Activated CD4-positive, alpha-beta memory T cell treated with anti-CD3 and anti-CD28 coated beads, Interleukin-2, amount 10 ng/mL, durations not matched to agents 7 days and 5 days (primary cell): ENCODE measurements at regions of chr10 and their contacts with region 1.

Region 1: DNA sequence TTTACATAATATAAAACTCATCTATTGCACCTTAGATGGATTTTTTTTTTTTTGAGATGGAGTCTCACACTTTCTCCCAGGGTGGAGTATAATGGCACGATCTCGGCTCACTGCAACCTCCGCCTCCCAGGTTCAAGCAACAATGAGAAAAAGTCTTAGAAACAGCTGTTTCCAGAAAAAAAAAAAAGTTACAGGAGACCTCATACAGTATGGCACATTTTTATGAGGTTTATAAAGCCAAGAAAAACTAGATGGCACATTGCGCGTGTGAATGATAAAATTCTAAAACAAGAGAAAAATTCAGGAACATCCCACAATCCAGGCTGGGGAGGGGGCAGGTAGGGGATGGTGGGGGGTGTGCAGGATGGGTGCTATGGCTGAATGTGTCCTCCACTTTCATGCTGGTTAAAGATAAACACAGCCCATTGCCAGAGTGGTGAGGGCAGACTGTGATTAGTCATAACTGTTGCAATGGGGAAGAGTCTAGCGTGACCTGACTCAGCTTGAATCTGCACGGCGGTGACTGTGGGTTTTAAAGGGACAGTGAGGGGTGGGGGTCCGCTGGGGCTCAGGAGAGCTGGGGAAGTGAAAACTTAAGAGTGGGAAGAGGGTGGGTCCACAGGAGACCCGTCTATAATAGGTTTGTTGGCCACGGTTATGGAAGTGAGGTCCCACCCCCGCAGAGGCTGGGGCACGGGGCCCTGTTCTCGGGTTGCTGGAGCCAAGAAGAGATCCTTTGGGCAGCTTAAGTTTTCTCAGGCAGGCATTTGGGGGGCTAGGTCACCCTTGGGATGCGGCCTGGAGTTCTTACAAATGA is 11.9 kb upstream of the LRRC27 start:
- DNase-seq: peak; percentile 70
- H3K4me3 Mint-ChIP-seq: no peak overlapping the region
- H3K27ac Mint-ChIP-seq: peak overlapping the region; percentile 53
- H3K4me1 Mint-ChIP-seq: peaks cover 39% of the 10 kb centered on the region
- H3K27me3 Mint-ChIP-seq: peaks cover 1% of the 10 kb centered on the region

Region 2: DNA sequence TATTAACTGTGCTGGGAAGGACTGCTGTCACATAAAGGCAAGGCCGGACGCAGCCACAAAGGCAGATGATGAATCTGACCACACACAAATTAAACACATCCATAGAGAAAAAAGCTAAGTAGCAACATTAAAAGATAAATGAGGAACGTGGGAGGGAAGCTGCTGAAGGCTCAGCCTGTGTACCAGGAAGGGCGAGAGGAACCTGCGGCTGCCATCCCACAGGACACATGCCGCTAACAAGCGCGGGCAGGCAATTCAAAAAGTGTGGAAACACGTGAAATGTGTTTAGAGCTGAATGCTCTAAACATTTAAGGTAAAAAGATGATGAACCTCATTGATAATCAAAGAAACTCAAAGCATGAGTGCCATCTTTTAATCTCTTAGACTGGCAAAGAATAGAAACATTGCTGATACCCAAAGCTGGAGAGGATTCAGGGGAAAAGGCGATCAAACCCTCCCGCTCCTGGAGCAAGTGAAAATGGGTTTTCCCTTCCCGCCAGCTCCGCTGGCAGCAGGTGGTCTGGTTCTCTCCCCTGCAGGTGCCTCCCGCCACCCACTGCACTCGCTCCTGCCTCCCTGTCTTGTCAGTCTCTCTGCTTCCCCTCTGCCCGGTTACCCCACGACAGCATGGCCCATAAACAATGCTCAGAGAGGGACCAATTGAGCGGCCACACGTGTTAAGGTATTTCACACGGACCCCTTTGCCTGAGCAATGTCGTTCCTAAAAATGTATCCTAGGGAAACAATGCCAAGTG is 16.5 kb before region 1 on chr10:
- CTCF ChIA-PET with region 1: no interaction called
- POLR2A ChIA-PET with region 1: no interaction called
- DNase-seq: no peak
- H3K4me3 Mint-ChIP-seq: no peak overlapping the region
- H3K27ac Mint-ChIP-seq: no peak overlapping the region
- H3K4me1 Mint-ChIP-seq: peaks cover 6% of the 10 kb centered on the region
- H3K27me3 Mint-ChIP-seq: peaks cover 18% of the 10 kb centered on the region

Region 3: GRCh38 chr10:132331526-132332432 is 11.7 kb after region 1 on chr10 and contains the start of gene LRRC27:
- CTCF ChIA-PET with region 1: interaction called, 8 read pairs
- POLR2A ChIA-PET with region 1: interaction called, 19 read pairs
- DNase-seq: peak; percentile 99
- H3K4me3 Mint-ChIP-seq: peak within 1 kb of the TSS; percentile 91
- H3K27ac Mint-ChIP-seq: peak within 1 kb of the TSS; percentile 86
- H3K4me1 Mint-ChIP-seq: peaks cover 53% of the 10 kb centered on the region
- H3K27me3 Mint-ChIP-seq: peaks cover 4% of the 10 kb centered on the region
- total RNA-seq, gene LRRC27: 3.3 to 3.9 TPM